ENCODE measurements at regions of chr10 and their contacts with region 1.

Region 1: DNA sequence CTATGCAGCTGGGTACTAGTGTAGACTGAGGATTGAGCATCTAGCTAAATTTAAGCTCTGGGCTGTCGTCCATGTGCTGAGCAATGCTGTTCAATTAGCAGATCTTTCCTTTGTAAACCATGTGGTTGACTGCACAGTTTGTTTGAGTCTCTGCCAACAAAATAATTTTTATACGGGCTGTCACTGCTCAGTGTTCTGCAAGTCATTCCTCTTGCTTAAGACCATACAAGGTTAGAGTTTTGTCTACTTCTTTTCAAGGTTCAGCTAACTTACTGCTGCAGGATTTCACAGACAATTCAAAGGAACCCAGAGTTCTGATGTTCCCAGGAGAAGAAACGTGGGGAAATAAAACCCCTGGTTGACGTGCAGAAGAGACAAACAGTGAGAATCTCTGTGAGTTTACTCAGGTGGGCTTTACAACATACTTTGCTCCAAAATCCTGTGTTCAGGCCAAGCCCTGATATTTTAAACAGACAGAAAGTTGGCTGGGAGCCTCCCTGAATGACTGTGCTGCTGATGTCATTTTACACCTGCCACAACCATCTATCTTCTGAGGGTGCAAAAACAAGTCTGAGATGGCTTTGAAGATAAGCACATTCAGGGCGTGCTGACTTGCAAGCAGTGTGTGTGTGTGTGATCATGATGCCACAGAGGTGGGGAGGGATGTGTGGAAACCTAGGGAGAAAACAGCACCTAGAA is 177.1 kb upstream of the SVIL start:
- DNase-seq: no peak
- ATAC-seq: no peak
- H3K4me3 Mint-ChIP-seq: no peak overlapping the region
- H3K27ac Mint-ChIP-seq: no peak overlapping the region
- H3K4me1 Mint-ChIP-seq: no peaks in the 10 kb centered on the region
- H3K27me3 Mint-ChIP-seq: no peaks in the 10 kb centered on the region
- CTCF ChIP-seq: no peak

Region 2: DNA sequence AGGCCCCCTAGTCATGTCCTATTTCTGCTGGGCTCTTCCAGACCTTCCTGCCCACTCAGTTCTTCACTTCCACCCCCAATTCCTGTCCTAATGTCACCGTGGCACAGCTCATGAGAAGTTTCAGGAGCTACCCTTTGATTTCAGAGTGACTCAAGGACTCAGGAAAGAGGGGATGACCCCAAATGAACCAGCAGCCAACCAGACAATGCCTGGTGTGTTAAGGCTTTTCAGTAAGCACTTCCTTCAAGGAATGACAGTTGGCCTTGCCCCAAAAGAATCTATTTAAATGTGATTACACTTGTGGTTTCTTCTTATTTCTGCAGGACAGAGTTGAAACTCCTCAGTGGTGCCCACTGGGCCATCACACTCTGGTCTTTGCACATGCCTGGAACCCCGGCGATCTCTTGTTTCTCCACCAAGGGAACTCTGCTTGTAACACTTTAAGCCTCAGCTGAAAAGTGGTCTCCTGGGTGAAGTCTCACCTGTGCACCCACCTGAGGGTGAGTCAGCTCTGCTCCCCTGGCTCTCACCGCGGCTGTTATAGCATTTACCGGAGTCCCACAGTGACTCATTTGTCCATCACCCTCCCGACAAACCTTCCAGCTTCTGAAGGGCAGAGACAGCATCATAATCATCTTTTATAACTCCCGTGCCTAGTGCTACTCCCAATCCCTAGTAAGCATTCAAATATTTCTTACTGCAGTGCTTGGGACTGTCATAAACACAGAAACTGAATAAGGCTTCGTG is 54.2 kb before region 1 on chr10:
- CTCF ChIA-PET with region 1: no interaction called
- POLR2A ChIA-PET with region 1: no interaction called
- intact Hi-C with region 1: loop called (anchors 10 kb)
- DNase-seq: no peak
- ATAC-seq: no peak
- H3K4me3 Mint-ChIP-seq: no peak overlapping the region
- H3K27ac Mint-ChIP-seq: no peak overlapping the region
- H3K4me1 Mint-ChIP-seq: no peaks in the 10 kb centered on the region
- H3K27me3 Mint-ChIP-seq: no peaks in the 10 kb centered on the region
- CTCF ChIP-seq: no peak